KBM-7 (cell line): ENCODE measurements at regions of chr11 and their contacts with region 1.

Region 1: GRCh38 chr11:44538375-44539054 is 26.9 kb upstream of the CD82 start:
- DNase-seq: peak; percentile 86

Region 2: DNA sequence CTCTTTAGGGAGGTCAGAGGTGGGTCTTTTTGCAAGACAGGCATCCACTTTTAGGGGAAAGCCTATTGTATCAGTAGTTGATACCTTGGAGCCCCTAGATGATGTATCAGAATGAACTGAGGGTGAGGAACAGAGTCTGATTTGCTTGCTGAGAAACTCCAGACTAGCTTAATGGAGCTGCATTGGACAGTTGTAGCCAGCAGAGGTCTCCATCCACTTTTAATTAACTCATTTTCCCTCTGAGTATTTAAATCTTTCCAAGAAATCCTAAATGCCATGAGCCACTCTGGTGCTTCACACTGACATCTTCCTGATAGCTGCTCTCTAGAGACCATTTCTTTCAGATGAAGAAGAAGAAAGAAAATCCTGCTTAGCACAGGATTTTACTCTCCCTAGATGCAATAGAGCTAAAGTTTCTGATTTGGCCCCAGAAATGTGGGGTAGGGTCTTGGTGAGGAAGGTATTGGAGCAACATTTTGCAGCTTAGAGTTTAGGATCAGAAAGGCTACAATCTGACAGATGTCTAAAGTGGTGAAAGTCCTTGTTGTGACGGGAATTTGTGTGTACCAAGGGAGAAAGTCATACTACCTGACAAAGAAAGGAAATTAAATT is 405.1 kb before region 1 on chr11:
- in situ Hi-C with region 1: loop called (anchors 25 kb)
- DNase-seq: peak; percentile 25

Region 3: DNA sequence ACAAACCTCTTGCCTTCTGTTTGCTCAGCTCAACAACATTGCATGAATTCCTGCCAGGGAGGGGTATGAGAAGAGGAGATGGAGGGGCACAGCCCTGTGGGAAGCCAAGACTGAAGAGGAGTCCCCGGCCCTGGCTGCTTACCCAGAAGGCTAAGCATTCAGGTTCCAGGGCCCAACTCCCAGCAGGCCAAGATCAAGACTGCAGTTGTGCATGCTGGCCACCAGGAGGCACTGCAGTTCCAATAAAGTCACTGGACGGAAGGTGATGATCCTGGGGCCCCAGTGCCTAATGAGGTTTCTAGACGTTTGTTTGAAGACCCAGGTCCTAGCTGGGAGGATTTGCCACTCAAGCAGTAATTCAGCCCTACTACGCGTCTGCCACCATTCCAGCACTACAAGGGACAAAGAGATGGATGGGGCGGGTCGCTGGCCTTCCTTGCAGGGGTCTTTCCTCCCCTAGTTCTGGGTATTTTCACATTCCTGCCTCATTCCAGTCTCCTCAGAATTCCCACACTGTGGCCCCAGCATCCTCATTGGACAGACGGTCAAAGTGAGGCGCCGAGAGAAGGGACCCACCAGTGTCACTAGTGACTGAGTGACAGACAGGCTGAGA is 252.1 kb before region 1 on chr11:
- in situ Hi-C with region 1: loop called (anchors 25 kb)
- DNase-seq: peak; percentile 74